H1 (cell line): ENCODE measurements at regions of chr1 and their contacts with region 1.

Region 1: DNA sequence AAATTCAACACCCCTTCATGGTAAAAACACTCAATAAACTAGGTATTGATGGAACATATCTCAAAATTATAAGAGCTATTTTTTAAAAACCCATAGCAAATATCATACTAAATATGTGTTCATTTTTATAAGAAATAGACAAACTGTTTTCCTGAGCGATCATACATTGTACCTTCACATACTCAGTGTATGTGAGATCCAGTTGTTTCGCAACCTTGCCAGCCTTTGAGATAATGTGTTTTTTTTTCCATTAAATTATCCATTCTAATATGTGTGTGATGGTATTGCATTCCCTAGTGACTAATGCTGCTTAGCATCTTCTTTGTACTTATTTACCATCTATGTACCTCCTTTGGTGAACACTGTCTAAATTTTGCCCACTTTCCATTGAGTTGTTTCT is 47.1 kb downstream of the CFH start:
- DNase-seq: no peak
- H3K4me3 ChIP-seq: no peak overlapping the region
- H3K27ac ChIP-seq: no peak overlapping the region
- H3K4me1 ChIP-seq: no peaks in the 10 kb centered on the region
- H3K27me3 ChIP-seq: no peaks in the 10 kb centered on the region
- CTCF ChIP-seq: no peak
- EP300 ChIP-seq: no peak
- POLR2A ChIP-seq: no peak
- RAD21 ChIP-seq: no peak

Region 2: GRCh38 chr1:196723322-196724185 is 24.6 kb after region 1 on chr1:
- CTCF ChIA-PET with region 1: interaction called, 13 read pairs
- POLR2A ChIA-PET with region 1: no interaction called
- DNase-seq: peak; percentile 53 to 81
- H3K4me3 ChIP-seq: no peak overlapping the region
- H3K27ac ChIP-seq: no peak overlapping the region
- H3K4me1 ChIP-seq: no peaks in the 10 kb centered on the region
- H3K27me3 ChIP-seq: no peaks in the 10 kb centered on the region
- CTCF ChIP-seq: peak; percentile 90 to 96 (median 92)
- EP300 ChIP-seq: no peak
- POLR2A ChIP-seq: no peak
- RAD21 ChIP-seq: peak; percentile 77 to 85